CD4-positive, alpha-beta memory T cell (primary cell): ENCODE measurements at regions of chrX and their contacts with region 1.

Region 1: DNA sequence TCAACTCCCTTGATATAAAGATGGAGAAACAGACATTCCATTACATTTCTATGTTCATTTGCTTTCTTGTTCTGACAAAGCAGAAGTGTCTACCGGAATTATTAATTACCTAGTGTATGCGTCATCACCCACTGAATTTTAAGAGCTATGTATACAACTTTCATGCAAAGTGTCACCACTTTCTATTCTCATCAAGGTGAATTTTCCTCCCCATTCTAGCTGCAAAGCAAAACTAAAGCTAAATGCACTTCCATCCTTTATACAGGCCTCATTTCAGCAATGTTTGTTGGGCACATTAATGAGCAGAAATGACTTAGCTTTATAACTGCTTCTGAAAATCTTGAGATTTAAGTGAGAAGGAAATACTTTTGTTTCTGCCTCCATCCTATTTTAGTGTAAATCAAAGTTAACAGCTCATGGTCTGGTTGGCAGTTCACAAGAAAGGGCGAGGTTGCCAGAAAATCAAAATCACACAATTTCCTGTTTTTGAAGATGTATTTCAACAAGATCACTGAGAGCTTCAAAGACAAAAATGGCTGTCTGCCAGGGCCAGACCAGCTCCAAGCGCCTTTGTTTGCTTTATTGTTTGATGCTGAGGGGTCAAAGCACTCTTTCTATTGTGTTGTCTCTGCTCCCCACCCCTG is 7.2 kb upstream of the FAM9C start:
- DNase-seq: peak; percentile 61 to 71 (median 70)
- H3K4me3 ChIP-seq: no peak overlapping the region
- H3K4me3 Mint-ChIP-seq: peak overlapping the region in 7 of 8 donors; percentile 10 to 80 (median 52)
- H3K27ac ChIP-seq: peak overlapping the region; percentile 42
- H3K27ac Mint-ChIP-seq: peak overlapping the region; percentile 85 to 97 (median 95)
- H3K4me1 ChIP-seq: peaks cover 88% of the 10 kb centered on the region
- H3K4me1 Mint-ChIP-seq: peaks cover 47 to 87% (median 65%) of the 10 kb centered on the region in 4 donors
- H3K27me3 ChIP-seq: no peaks in the 10 kb centered on the region
- H3K27me3 Mint-ChIP-seq: no peaks in the 10 kb centered on the region

Region 2: GRCh38 chrX:12672367-12673106 is 379.1 kb before region 1 on chrX:
- CTCF ChIA-PET with region 1: no interaction called
- POLR2A ChIA-PET with region 1: no interaction called
- intact Hi-C with region 1: no loop called
- DNase-seq: no peak
- H3K4me3 ChIP-seq: no peak overlapping the region
- H3K4me3 Mint-ChIP-seq: no peak overlapping the region
- H3K27ac ChIP-seq: no peak overlapping the region
- H3K27ac Mint-ChIP-seq: no peak overlapping the region
- H3K4me1 ChIP-seq: no peaks in the 10 kb centered on the region
- H3K4me1 Mint-ChIP-seq: no peaks in the 10 kb centered on the region
- H3K27me3 ChIP-seq: no peaks in the 10 kb centered on the region
- H3K27me3 Mint-ChIP-seq: no peaks in the 10 kb centered on the region

Region 3: GRCh38 chrX:12955882-12956703 is 95.6 kb before region 1 on chrX:
- CTCF ChIA-PET with region 1: interaction called, 6 read pairs
- POLR2A ChIA-PET with region 1: interaction called, 16 read pairs
- intact Hi-C with region 1: no loop called
- DNase-seq: peak; percentile 52 to 84 (median 65)
- H3K4me3 ChIP-seq: peak overlapping the region; percentile 23 to 51
- H3K4me3 Mint-ChIP-seq: peak overlapping the region; percentile 80 to 92 (median 86)
- H3K27ac ChIP-seq: peak overlapping the region; percentile 88
- H3K27ac Mint-ChIP-seq: peak overlapping the region; percentile 94 to 99 (median 97)
- H3K4me1 ChIP-seq: peaks cover 96% of the 10 kb centered on the region
- H3K4me1 Mint-ChIP-seq: peaks cover 42 to 90% (median 73%) of the 10 kb centered on the region in 4 donors
- H3K27me3 ChIP-seq: no peaks in the 10 kb centered on the region
- H3K27me3 Mint-ChIP-seq: no peaks in the 10 kb centered on the region

Region 4: GRCh38 chrX:13013363-13014110 is 38.1 kb before region 1 on chrX:
- CTCF ChIA-PET with region 1: interaction called, 6 read pairs
- POLR2A ChIA-PET with region 1: interaction called, 21 read pairs
- intact Hi-C with region 1: loop called (anchors 5 kb)
- DNase-seq: peak in 2 of 5 donors; percentile 19 to 23
- H3K4me3 ChIP-seq: no peak overlapping the region
- H3K4me3 Mint-ChIP-seq: peak overlapping the region; percentile 6 to 44 (median 20)
- H3K27ac ChIP-seq: peak overlapping the region; percentile 61
- H3K27ac Mint-ChIP-seq: peak overlapping the region; percentile 56 to 93 (median 80)
- H3K4me1 ChIP-seq: peaks cover 56% of the 10 kb centered on the region
- H3K4me1 Mint-ChIP-seq: peaks cover 36 to 72% (median 53%) of the 10 kb centered on the region in 4 donors
- H3K27me3 ChIP-seq: no peaks in the 10 kb centered on the region
- H3K27me3 Mint-ChIP-seq: no peaks in the 10 kb centered on the region

Region 5: GRCh38 chrX:13022926-13023325 is 28.7 kb before region 1 on chrX:
- CTCF ChIA-PET with region 1: interaction called, 5 read pairs
- POLR2A ChIA-PET with region 1: interaction called, 10 read pairs
- intact Hi-C with region 1: no loop called
- DNase-seq: no peak
- H3K4me3 ChIP-seq: no peak overlapping the region
- H3K4me3 Mint-ChIP-seq: peak overlapping the region in 2 of 8 donors; percentile 6 to 34
- H3K27ac ChIP-seq: no peak overlapping the region
- H3K27ac Mint-ChIP-seq: peak overlapping the region in 5 of 7 donors; percentile 43 to 72 (median 62)
- H3K4me1 ChIP-seq: peaks cover 56% of the 10 kb centered on the region
- H3K4me1 Mint-ChIP-seq: peaks cover 31 to 60% (median 41%) of the 10 kb centered on the region in 4 donors
- H3K27me3 ChIP-seq: no peaks in the 10 kb centered on the region
- H3K27me3 Mint-ChIP-seq: no peaks in the 10 kb centered on the region

Region 6: DNA sequence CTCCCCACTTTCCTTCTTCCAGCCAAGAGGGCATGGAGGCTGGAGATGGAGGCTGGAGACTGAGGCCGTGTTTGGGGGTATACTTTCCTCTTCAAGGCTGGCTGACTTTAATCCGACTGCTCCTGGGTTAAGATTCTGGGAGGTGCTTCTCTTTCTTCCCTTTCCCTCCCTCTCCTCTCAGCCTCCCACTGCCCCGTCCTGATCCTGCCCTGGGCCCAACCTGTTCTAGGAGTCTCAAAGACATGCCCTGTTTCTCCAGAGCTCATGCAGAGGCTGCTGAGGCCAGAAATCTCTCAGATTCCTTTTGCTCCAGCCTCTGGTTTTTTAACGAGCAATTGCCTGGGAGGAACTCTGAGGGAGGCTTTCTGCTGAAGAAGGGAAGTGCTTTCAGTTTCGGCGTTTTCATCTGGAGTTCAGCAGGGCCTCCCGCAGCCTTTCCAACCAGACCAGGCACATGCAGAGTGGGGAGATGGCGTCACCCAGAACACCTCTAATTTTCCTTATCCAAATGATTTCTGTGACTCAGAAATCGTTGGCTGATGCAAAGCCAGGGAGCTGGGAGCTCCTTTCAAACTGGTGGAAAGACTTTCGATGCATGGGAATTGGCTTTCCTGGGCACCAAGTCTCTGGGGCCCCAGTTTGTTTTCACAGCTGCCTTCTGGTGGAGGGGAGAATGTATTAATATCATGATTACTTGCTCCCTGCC is 27.2 kb after region 1 on chrX:
- CTCF ChIA-PET with region 1: interaction called, 8 read pairs
- POLR2A ChIA-PET with region 1: interaction called, 178 read pairs
- intact Hi-C with region 1: loop called (anchors 2 kb)
- DNase-seq: no peak
- H3K4me3 ChIP-seq: peak overlapping the region in 1 of 2 donors; percentile 27
- H3K4me3 Mint-ChIP-seq: peak overlapping the region; percentile 33 to 81 (median 66)
- H3K27ac ChIP-seq: peak overlapping the region; percentile 62
- H3K27ac Mint-ChIP-seq: peak overlapping the region; percentile 84 to 95 (median 93)
- H3K4me1 ChIP-seq: peaks cover 100% of the 10 kb centered on the region
- H3K4me1 Mint-ChIP-seq: peaks cover 57 to 96% (median 77%) of the 10 kb centered on the region in 4 donors
- H3K27me3 ChIP-seq: no peaks in the 10 kb centered on the region
- H3K27me3 Mint-ChIP-seq: no peaks in the 10 kb centered on the region

Region 7: GRCh38 chrX:13194291-13195103 is 142.8 kb after region 1 on chrX:
- CTCF ChIA-PET with region 1: no interaction called
- POLR2A ChIA-PET with region 1: no interaction called
- intact Hi-C with region 1: no loop called
- DNase-seq: no peak
- H3K4me3 ChIP-seq: no peak overlapping the region
- H3K4me3 Mint-ChIP-seq: no peak overlapping the region
- H3K27ac ChIP-seq: no peak overlapping the region
- H3K27ac Mint-ChIP-seq: no peak overlapping the region
- H3K4me1 ChIP-seq: no peaks in the 10 kb centered on the region
- H3K4me1 Mint-ChIP-seq: peaks cover 0 to 3% (median 0%) of the 10 kb centered on the region in 4 donors
- H3K27me3 ChIP-seq: no peaks in the 10 kb centered on the region
- H3K27me3 Mint-ChIP-seq: no peaks in the 10 kb centered on the region